ENCODE measurements at regions of chr6 and their contacts with region 1.

Region 1: DNA sequence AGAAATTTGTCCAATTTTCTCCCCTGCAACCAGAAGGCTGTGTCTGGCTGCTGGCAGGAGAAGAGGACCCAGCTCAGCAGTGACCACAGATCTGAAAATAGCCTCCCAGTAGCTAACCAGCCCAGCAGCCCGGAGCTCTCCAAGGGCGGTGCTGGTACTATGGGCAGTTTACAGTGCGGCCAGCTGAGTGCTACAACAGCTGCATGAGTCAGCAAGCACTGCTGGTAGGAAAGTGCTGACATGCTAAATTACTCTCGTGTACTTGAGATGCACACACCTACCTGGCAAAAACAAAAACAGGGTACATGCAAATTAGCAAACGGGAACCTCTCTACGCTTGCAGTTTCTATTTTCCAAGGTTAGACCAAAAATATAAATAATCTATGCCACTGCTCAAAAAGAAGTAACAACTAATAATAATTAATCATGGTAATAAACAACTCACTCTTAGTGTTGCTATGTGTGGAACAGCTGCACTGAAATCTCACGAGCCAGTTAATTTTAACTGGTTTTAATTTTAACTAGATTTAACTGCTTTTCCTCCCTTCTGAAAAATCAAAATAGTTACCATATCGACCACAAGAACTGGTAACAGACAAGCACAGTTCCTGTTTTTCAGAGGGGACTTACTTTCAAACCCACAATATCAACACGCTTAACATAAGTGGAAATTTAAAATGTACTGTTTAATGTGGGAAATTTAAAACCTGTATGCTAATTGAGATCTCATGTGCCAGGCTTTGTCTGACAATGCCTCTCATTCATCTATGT is 10.8 kb downstream of the BACH2 start:
- DNase-seq: peak; percentile 73
- H3K4me3 ChIP-seq: peak overlapping the region; percentile 65
- H3K27ac ChIP-seq: peak overlapping the region; percentile 84
- H3K4me1 ChIP-seq: peaks cover 93% of the 10 kb centered on the region
- CTCF ChIP-seq: no peak

Region 2: DNA sequence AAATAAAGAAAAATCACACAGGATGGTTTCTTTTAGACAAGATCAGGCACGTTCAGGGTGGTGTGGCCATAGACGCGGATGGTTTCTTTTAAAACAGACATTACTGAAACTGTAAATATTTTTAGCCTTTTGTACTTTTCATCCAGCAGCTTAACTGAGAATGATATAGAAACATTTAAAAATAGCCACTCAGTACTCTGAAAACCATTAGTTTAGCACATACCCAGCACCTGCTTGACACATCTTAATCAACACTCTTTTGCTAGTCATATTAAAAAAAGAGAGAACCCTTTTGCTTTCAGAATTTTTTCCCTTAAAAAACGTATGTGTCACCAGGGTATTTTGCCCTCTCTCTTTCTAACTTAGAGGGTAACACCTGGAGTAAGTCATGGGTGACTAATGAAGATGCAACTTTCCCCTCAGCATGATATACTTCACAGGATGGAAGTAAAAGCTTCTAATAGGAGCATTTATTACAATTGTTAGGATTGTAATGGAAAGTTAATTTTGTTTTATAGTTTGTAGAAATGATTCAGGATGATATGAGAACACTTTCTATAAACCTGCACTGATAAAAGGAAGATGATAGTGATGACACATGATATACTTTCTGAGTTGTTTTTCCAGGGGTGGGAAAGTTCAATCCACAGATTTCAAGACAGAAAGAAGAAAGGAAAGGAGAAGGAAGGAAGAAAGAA is 34.4 kb before region 1 on chr6:
- CTCF ChIA-PET with region 1: interaction called, 3 read pairs
- POLR2A ChIA-PET with region 1: interaction called, 7 read pairs
- intact Hi-C with region 1: loop called (anchors 1 kb)
- DNase-seq: peak; percentile 84
- H3K4me3 ChIP-seq: peak overlapping the region; percentile 24
- H3K27ac ChIP-seq: peak overlapping the region; percentile 84
- H3K4me1 ChIP-seq: peaks cover 72% of the 10 kb centered on the region
- CTCF ChIP-seq: no peak

Region 3: DNA sequence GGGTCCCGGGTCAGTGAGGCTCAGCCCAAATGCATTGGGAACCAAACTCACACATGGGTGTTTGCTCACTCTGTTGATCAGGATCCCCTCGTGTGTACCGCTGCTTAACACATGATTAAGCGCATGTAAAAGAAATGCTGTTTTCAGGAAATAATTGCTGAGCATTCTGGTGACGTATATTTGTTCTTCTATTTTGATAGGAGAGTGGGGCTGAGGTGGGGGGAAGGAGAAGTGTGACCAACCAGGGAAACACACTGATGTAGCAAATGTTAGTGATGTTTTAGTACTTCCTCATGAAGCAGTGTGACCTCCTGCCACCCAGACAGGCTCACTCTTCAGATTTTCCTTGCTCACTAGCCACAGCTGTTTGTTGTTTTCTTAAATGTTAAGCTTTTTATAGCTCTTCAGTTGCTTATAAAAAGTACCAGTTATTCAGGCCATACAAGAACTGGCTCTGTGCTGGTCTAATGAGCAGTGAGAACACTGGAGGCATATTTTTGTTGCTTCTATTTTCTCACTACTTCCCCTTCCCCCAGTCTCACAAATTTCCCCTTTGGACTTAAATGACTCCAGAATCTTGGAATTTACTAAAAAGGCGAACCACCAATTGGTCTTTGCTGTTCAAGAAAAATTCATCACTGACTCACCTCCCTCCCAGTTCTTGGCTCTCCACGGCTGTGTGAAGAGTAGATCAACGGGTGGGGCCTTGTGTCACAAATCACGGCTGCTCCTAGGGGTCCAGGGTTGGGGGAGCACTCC is 90.1 kb after region 1 on chr6:
- CTCF ChIA-PET with region 1: no interaction called
- POLR2A ChIA-PET with region 1: interaction called, 6 read pairs
- intact Hi-C with region 1: loop called (anchors 1 kb)
- DNase-seq: peak; percentile 97
- H3K4me3 ChIP-seq: peak overlapping the region; percentile 68
- H3K27ac ChIP-seq: peak overlapping the region; percentile 100
- H3K4me1 ChIP-seq: peaks cover 98% of the 10 kb centered on the region
- CTCF ChIP-seq: no peak

Region 4: DNA sequence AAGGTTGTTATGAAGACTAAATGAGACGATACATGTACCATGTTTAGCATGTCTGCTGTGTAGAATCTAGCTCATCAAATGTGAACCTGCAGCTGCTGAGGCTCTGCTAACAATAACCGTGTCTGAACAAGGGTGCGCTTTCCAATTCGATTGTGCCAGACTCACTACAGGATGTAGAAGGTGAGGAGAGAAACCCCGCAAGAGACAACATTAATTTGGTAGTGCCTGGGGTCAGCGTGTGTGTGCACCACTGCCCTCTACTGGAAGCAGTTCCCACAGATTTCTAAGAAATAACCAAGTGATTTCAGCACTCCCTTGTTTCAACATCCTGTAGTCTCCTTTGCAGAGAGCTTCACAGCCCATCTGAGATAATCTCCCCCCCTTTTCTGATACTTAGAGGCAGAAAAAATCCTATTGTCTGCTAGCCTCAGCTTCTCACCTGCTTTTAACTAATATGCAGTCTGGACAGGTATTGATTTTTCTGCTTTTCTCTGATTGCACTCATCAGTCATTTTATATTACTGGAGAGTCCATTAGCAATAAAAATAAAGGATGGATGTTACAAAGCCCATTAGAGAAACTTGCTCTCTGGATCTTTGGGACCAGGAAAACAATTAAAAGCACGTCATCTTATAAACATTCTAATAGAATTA is 107.6 kb after region 1 on chr6:
- CTCF ChIA-PET with region 1: interaction called, 15 read pairs
- POLR2A ChIA-PET with region 1: interaction called, 20 read pairs
- intact Hi-C with region 1: loop called (anchors 1 kb)
- DNase-seq: peak; percentile 93
- H3K4me3 ChIP-seq: peak overlapping the region; percentile 18
- H3K27ac ChIP-seq: peak overlapping the region; percentile 71
- H3K4me1 ChIP-seq: peaks cover 67% of the 10 kb centered on the region
- CTCF ChIP-seq: peak; percentile 97

Measured in OCI-LY7 (cell line).